ENCODE measurements at regions of chr2 and their contacts with region 1.

Region 1: GRCh38 chr2:112259509-112260294 is 4.9 kb upstream of the ZC3H8 start:
- DNase-seq: peak; percentile 44 to 80
- ATAC-seq: peak; percentile 74 to 77
- H3K4me3 ChIP-seq: no peak overlapping the region
- H3K27ac ChIP-seq: 0 out of 6 replicates have a peak overlapping the region, but pooled peaks of 1 of the 2 experiments have one; percentile 38
- H3K4me1 ChIP-seq: no peaks in the 10 kb centered on the region
- CTCF ChIP-seq: peak; percentile 92
- EP300 ChIP-seq: no peak
- POLR2A ChIP-seq: no peak
- RAD21 ChIP-seq: peak; percentile 88 to 89

Region 2: DNA sequence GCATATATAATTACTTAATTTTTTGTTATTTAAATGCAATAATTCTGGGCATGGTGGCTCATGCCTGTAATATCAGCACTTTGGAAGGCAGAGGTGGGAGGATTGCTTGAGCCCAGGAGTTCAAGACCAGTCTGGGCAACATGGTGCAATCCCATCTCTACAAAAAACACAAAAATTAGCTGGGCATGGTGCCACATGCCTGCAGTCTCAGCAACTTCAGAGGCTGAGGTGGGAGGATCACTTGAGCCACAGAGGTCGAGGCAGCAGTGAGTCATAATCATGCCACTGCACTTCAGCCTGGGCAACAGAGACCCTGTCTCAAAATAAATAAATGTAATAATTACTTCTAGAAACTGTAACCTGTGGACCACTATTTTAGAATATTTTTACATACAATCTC is 226.1 kb before region 1 on chr2:
- CTCF ChIA-PET with region 1: no interaction called
- POLR2A ChIA-PET with region 1: no interaction called
- DNase-seq: no peak
- ATAC-seq: no peak
- H3K4me3 ChIP-seq: no peak overlapping the region
- H3K27ac ChIP-seq: no peak overlapping the region
- H3K4me1 ChIP-seq: no peaks in the 10 kb centered on the region
- CTCF ChIP-seq: no peak
- EP300 ChIP-seq: no peak
- POLR2A ChIP-seq: no peak
- RAD21 ChIP-seq: no peak

Region 3: DNA sequence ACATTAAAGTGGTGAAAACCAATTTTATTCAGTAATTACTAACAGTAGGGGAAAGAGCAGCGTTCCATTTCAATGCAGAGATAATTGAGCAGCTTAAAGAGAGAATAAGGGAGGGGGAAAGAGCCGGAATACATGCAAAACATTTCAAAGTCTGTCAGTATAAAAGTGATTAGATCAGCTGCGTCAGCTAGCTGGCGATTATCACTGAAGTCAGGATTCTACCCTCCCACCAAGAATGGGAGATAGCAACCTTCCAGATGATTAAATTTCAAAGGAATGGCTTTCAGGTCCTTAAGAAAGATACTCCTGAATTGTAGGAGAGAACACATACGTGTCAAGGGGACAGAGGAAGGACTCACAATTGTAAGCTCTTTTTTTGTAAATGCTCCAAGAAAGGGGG is 13.0 kb after region 1 on chr2:
- CTCF ChIA-PET with region 1: interaction called, 12 read pairs
- POLR2A ChIA-PET with region 1: no interaction called
- DNase-seq: no peak
- ATAC-seq: no peak
- H3K4me3 ChIP-seq: no peak overlapping the region
- H3K27ac ChIP-seq: no peak overlapping the region
- H3K4me1 ChIP-seq: 0 out of 3 replicates have a peak, but pooled peaks cover 5% of the 10 kb centered on the region
- CTCF ChIP-seq: no peak
- EP300 ChIP-seq: no peak
- POLR2A ChIP-seq: no peak
- RAD21 ChIP-seq: no peak

Region 4: DNA sequence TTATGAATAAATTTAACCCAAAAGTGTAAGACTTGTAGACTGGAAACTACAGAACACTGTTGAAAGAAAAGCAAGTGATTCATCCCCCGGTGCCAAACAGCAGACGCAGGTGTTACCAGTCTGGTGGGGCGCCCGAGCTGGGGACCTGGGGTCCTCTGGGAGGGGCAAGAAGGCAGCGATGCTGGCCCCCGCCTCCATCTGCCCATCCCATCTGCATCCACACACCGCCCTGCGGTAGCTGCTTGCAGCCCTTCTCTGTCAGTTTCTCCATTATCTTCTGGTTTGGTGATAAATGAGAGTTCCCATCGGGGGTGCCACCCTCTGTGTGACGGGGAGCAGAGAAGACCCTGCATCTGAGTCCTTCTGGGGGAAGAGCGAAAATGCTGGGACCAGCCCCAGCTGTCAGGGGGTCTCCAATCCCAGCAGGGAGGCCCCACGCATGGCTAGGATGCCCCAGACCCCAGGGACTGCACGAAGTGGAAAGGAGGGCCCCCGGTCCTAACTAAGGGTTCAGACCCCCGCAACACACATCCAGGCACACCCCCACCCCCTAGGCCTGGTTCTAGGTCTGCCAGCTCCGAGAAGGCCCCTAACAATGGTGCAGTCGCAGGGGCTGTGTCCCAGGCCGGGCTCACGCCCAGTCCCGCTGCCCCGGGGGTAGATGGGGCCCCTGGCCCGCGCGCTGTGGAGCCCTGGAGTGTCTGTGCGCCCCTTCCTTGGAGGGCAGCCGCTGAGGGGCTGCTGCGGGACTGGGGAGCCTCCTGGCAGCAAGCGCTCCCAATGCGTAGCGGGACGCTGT is 174.4 kb after region 1 on chr2:
- CTCF ChIA-PET with region 1: interaction called, 10 read pairs
- POLR2A ChIA-PET with region 1: interaction called, 4 read pairs
- DNase-seq: no peak
- ATAC-seq: no peak
- H3K4me3 ChIP-seq: no peak overlapping the region
- H3K27ac ChIP-seq: no peak overlapping the region
- H3K4me1 ChIP-seq: no peaks in the 10 kb centered on the region
- CTCF ChIP-seq: no peak
- EP300 ChIP-seq: no peak
- POLR2A ChIP-seq: no peak
- RAD21 ChIP-seq: no peak